A673 (cell line): ENCODE measurements at regions of chr10 and their contacts with region 1.

Region 1: GRCh38 chr10:95374597-95375209 is 83.9 kb upstream of the PDLIM1 start:
- DNase-seq: peak; percentile 82
- H3K4me3 ChIP-seq: no peak overlapping the region
- H3K27ac ChIP-seq: no peak overlapping the region
- H3K4me1 ChIP-seq: no peaks in the 10 kb centered on the region
- H3K27me3 ChIP-seq: peaks cover 38% of the 10 kb centered on the region
- CTCF ChIP-seq: peak; percentile 84

Region 2: GRCh38 chr10:95201736-95202135 is 173.0 kb before region 1 on chr10:
- CTCF ChIA-PET with region 1: no interaction called
- POLR2A ChIA-PET with region 1: no interaction called
- intact Hi-C with region 1: no loop called
- DNase-seq: no peak
- H3K4me3 ChIP-seq: no peak overlapping the region
- H3K27ac ChIP-seq: no peak overlapping the region
- H3K4me1 ChIP-seq: no peaks in the 10 kb centered on the region
- H3K27me3 ChIP-seq: no peaks in the 10 kb centered on the region
- CTCF ChIP-seq: no peak

Region 3: GRCh38 chr10:95841661-95842498 is 467.2 kb after region 1 on chr10:
- CTCF ChIA-PET with region 1: no interaction called
- POLR2A ChIA-PET with region 1: no interaction called
- intact Hi-C with region 1: loop called (anchors 5 kb)
- DNase-seq: peak; percentile 74
- H3K4me3 ChIP-seq: no peak overlapping the region
- H3K27ac ChIP-seq: no peak overlapping the region
- H3K4me1 ChIP-seq: no peaks in the 10 kb centered on the region
- H3K27me3 ChIP-seq: no peaks in the 10 kb centered on the region
- CTCF ChIP-seq: peak; percentile 79